ENCODE measurements at regions of chr22 and their contacts with region 1.

Region 1: GRCh38 chr22:40922484-40923303 is 28.5 kb upstream of the RBX1 start:
- DNase-seq: peak; percentile 71
- H3K4me3 ChIP-seq: no peak overlapping the region
- H3K27ac ChIP-seq: no peak overlapping the region
- H3K4me1 ChIP-seq: no peaks in the 10 kb centered on the region
- H3K27me3 ChIP-seq: no peaks in the 10 kb centered on the region
- CTCF ChIP-seq: peak; percentile 76

Region 2: DNA sequence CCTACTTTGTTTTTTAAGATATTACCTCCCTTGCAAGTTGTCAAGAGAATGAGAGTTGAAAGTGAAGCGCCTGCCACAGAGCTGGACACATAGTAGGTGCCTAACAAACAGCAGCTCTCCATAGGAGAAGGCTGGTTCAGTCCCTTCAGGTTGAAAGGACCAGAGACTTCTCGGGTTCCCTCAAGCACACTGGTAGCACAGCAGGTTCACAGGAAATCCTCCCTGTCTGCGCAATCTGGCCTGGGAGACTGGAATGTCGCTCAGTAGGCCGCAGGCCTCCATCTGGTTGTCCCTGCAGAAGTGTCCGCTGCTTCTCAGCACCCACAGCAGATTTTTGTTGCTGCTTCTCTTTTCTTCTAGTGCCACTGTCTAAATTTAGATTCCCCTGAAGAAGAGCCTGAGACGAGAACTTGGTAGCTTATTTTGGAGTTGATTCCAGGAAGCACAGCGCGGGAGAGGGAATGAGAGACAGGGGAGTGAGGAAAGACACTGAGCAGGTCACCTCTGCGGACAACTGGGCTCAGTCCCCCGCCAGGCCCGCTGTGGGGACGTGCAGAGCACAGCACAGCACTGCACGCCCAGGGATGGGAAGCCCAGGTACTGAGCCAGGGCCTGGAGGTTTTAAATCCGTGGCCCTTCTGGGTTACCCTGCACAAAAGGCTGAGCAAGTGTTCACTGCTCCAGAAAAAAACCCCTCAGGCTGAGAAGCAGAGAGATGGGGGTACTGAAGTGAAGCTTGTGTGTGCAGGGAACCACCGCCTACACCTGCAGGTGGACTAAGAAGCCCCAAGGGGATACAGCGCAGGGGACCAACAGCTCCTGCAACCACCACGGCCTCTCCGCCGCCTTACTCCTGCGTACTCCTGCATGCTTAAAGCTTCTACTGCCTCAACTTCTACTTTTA is 60.0 kb after region 1 on chr22:
- CTCF ChIA-PET with region 1: no interaction called
- POLR2A ChIA-PET with region 1: interaction called, 11 read pairs
- intact Hi-C with region 1: no loop called
- DNase-seq: no peak
- H3K4me3 ChIP-seq: no peak overlapping the region
- H3K27ac ChIP-seq: no peak overlapping the region
- H3K4me1 ChIP-seq: no peaks in the 10 kb centered on the region
- H3K27me3 ChIP-seq: no peaks in the 10 kb centered on the region
- CTCF ChIP-seq: no peak

Region 3: DNA sequence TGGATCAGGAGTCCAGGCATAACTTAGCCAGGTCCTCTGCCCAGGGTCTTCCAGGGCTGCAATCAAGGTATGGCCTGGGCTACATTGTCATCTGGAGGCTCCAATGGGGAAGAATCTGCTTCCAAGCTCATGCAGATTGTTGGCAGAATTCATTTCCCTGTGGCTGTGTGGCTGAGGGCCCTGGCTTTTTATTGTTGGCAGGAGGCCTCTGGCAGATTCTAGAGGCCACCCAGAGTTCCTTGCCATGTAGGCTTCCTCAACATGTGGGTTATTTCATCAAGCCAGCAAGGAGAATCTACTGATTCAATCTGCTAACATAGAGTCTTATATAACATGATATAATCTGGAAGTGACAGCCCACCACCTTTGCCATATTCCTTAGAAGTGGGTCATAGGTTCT is 153.3 kb after region 1 on chr22:
- CTCF ChIA-PET with region 1: no interaction called
- POLR2A ChIA-PET with region 1: interaction called, 15 read pairs
- intact Hi-C with region 1: no loop called
- DNase-seq: no peak
- H3K4me3 ChIP-seq: no peak overlapping the region
- H3K27ac ChIP-seq: no peak overlapping the region
- H3K4me1 ChIP-seq: no peaks in the 10 kb centered on the region
- H3K27me3 ChIP-seq: no peaks in the 10 kb centered on the region
- CTCF ChIP-seq: no peak

Region 4: DNA sequence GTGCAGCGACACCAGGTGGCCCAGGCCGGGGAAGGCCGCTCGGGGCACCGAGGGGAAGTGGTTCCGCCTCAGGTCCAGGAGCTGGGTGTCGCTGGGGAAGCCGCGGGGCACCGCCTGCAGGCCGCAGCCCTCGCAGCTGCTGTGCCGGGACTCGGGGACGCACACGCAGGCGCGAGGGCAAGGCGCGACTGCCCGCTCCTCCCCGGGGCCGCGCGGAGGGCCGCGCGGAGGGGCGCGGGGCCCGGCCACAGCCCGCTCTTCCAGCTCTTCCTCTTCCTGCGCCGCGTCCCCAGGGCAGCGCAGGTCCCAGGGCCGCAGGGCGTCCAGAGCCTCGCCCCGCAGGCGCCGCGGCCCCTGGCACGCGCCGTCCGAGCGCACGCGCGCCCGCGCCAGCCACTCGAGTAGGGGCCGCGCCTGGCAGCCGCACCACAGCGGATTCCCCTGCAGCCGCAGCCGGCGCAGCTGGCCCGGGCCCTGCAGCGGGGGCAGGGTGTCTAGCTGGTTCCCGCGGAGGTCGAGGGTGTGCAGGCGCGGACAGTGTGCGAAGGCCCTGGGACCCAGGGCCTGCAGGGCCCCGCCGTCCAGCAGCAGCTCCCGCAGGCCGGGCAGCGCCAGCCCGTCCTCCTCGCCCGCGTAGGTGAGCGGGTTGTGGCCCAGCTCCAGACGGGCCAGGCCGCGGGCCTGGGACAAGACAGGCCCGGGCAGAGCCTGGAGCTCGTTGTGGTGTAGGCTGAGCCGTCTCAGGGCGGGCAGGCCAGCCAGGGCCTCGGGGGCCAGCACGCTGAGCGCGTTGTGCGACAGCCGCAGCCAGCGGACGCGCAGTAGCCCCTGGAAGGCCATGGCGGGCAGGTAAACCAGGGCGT is 315.2 kb after region 1 on chr22:
- CTCF ChIA-PET with region 1: interaction called, 12 read pairs
- POLR2A ChIA-PET with region 1: no interaction called
- intact Hi-C with region 1: no loop called
- DNase-seq: no peak
- H3K4me3 ChIP-seq: peak overlapping the region; percentile 31
- H3K27ac ChIP-seq: no peak overlapping the region
- H3K4me1 ChIP-seq: no peaks in the 10 kb centered on the region
- H3K27me3 ChIP-seq: no peaks in the 10 kb centered on the region
- CTCF ChIP-seq: peak; percentile 33; the same call in 1 of the 2 replicates

Region 5: GRCh38 chr22:41517172-41518047 is 594.7 kb after region 1 on chr22:
- CTCF ChIA-PET with region 1: interaction called, 6 read pairs
- POLR2A ChIA-PET with region 1: no interaction called
- intact Hi-C with region 1: loop called (anchors 10 kb)
- DNase-seq: peak; percentile 74
- H3K4me3 ChIP-seq: no peak overlapping the region
- H3K27ac ChIP-seq: no peak overlapping the region
- H3K4me1 ChIP-seq: peaks cover 11% of the 10 kb centered on the region
- H3K27me3 ChIP-seq: no peaks in the 10 kb centered on the region
- CTCF ChIP-seq: peak; percentile 91